CD8-positive, alpha-beta T cell (primary cell): ENCODE measurements at regions of chr22 and their contacts with region 1.

Region 1: GRCh38 chr22:25062386-25063085 is 110.0 kb downstream of the KIAA1671 start:
- DNase-seq: peak; percentile 71 to 96 (median 85)
- ATAC-seq: peak; percentile 89
- H3K4me3 ChIP-seq: peak overlapping the region; percentile 38 to 39
- H3K4me3 Mint-ChIP-seq: peak overlapping the region; percentile 82
- H3K27ac ChIP-seq: peak overlapping the region; percentile 67 to 69
- H3K27ac Mint-ChIP-seq: peak overlapping the region; percentile 97
- H3K4me1 ChIP-seq: peaks cover 56% of the 10 kb centered on the region
- H3K4me1 Mint-ChIP-seq: peaks cover 70% of the 10 kb centered on the region
- H3K27me3 ChIP-seq: peaks cover 0 to 2% of the 10 kb centered on the region in 2 experiments
- H3K27me3 Mint-ChIP-seq: no peaks in the 10 kb centered on the region
- CTCF ChIP-seq: no peak

Region 2: DNA sequence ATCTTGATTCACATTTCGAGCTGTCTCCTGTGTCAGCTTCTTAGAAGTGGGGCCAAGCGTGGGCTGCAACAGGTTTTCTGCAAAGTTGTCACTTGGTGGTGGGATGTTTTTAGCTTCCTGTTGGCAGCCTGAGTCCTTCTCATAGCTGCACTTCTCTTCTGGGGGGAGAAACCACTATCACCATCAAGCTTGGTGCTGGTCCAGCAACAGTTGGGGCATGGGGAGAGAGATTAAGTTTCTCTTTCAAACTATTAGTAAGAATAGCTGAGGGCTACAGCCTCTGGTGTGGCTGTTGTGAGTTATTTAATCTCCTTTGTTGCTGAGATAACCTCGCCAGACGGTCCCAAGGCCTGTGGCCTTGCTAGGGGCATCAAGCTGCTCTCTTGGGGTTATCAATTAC is 13.8 kb after region 1 on chr22:
- CTCF ChIA-PET with region 1: interaction called, 151 read pairs
- POLR2A ChIA-PET with region 1: interaction called, 36 read pairs
- intact Hi-C with region 1: loop called (anchors 1 kb)
- DNase-seq: peak in 5 of 9 experiments; percentile 17 to 81 (median 61)
- ATAC-seq: peak; percentile 60
- H3K4me3 ChIP-seq: peak overlapping the region in 1 of 2 experiments; percentile 10
- H3K4me3 Mint-ChIP-seq: peak overlapping the region; percentile 67
- H3K27ac ChIP-seq: peak overlapping the region in 1 of 2 experiments; percentile 57
- H3K27ac Mint-ChIP-seq: peak overlapping the region; percentile 91
- H3K4me1 ChIP-seq: peaks cover 35% of the 10 kb centered on the region
- H3K4me1 Mint-ChIP-seq: peaks cover 69% of the 10 kb centered on the region
- H3K27me3 ChIP-seq: no peaks in the 10 kb centered on the region
- H3K27me3 Mint-ChIP-seq: no peaks in the 10 kb centered on the region
- CTCF ChIP-seq: no peak